A673 (cell line): ENCODE measurements at regions of chr14 and their contacts with region 1.

Region 1: DNA sequence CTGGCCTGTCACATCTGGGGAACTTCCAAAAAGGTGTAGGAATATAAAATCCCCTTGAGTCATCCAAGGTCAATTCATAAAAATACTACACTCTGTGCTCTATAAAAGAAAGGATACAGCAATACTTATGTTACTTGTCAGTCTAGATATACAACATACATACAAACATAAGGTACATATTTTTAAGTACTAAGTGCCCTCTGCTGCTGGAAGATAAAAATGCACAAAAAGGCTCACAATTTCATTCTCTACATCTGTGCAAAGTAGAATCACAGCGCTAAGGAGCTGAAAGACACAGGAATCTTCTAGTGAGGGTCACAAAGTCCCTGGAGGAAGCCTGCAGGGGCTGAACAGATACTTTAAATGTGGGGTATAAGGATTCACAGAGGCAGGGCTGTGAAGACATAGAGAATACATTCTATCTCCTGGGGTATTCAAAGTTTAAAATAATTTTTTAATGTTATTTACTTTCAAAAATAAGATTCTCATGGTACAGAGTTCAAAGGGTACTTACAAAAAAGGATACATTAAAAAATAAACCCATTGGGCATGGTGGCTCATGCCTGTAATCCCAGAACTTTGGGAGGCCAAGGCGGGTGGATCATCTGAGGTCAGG is 10.2 kb upstream of the GOLGA5 start:
- DNase-seq: peak; percentile 68
- H3K4me3 ChIP-seq: no peak overlapping the region
- H3K27ac ChIP-seq: no peak overlapping the region
- H3K4me1 ChIP-seq: no peaks in the 10 kb centered on the region
- H3K27me3 ChIP-seq: no peaks in the 10 kb centered on the region
- CTCF ChIP-seq: peak; percentile 65

Region 2: GRCh38 chr14:92686900-92687444 is 97.0 kb before region 1 on chr14:
- CTCF ChIA-PET with region 1: interaction called, 9 read pairs
- POLR2A ChIA-PET with region 1: no interaction called
- intact Hi-C with region 1: loop called (anchors 2 kb)
- DNase-seq: peak; percentile 90
- H3K4me3 ChIP-seq: peak overlapping the region; percentile 37
- H3K27ac ChIP-seq: no peak overlapping the region
- H3K4me1 ChIP-seq: peaks cover 11% of the 10 kb centered on the region
- H3K27me3 ChIP-seq: no peaks in the 10 kb centered on the region
- CTCF ChIP-seq: peak; percentile 97

Region 3: GRCh38 chr14:92719890-92720323 is 64.0 kb before region 1 on chr14:
- CTCF ChIA-PET with region 1: interaction called, 3 read pairs
- POLR2A ChIA-PET with region 1: no interaction called
- intact Hi-C with region 1: loop called (anchors 2 kb)
- DNase-seq: no peak
- H3K4me3 ChIP-seq: no peak overlapping the region
- H3K27ac ChIP-seq: no peak overlapping the region
- H3K4me1 ChIP-seq: no peaks in the 10 kb centered on the region
- H3K27me3 ChIP-seq: no peaks in the 10 kb centered on the region
- CTCF ChIP-seq: no peak

Region 4: GRCh38 chr14:92832137-92832700 is 48.3 kb after region 1 on chr14:
- CTCF ChIA-PET with region 1: no interaction called
- POLR2A ChIA-PET with region 1: no interaction called
- intact Hi-C with region 1: no loop called
- DNase-seq: no peak
- H3K4me3 ChIP-seq: no peak overlapping the region
- H3K27ac ChIP-seq: no peak overlapping the region
- H3K4me1 ChIP-seq: no peaks in the 10 kb centered on the region
- H3K27me3 ChIP-seq: no peaks in the 10 kb centered on the region
- CTCF ChIP-seq: no peak

Region 5: GRCh38 chr14:93742761-93743160 is 958.8 kb after region 1 on chr14:
- CTCF ChIA-PET with region 1: no interaction called
- POLR2A ChIA-PET with region 1: no interaction called
- intact Hi-C with region 1: no loop called
- DNase-seq: no peak
- H3K4me3 ChIP-seq: no peak overlapping the region
- H3K27ac ChIP-seq: no peak overlapping the region
- H3K4me1 ChIP-seq: no peaks in the 10 kb centered on the region
- H3K27me3 ChIP-seq: peaks cover 7% of the 10 kb centered on the region
- CTCF ChIP-seq: no peak